Mucosa of descending colon (tissue), 3 donors: ENCODE measurements at regions of chr22 and their contacts with region 1.

Region 1: DNA sequence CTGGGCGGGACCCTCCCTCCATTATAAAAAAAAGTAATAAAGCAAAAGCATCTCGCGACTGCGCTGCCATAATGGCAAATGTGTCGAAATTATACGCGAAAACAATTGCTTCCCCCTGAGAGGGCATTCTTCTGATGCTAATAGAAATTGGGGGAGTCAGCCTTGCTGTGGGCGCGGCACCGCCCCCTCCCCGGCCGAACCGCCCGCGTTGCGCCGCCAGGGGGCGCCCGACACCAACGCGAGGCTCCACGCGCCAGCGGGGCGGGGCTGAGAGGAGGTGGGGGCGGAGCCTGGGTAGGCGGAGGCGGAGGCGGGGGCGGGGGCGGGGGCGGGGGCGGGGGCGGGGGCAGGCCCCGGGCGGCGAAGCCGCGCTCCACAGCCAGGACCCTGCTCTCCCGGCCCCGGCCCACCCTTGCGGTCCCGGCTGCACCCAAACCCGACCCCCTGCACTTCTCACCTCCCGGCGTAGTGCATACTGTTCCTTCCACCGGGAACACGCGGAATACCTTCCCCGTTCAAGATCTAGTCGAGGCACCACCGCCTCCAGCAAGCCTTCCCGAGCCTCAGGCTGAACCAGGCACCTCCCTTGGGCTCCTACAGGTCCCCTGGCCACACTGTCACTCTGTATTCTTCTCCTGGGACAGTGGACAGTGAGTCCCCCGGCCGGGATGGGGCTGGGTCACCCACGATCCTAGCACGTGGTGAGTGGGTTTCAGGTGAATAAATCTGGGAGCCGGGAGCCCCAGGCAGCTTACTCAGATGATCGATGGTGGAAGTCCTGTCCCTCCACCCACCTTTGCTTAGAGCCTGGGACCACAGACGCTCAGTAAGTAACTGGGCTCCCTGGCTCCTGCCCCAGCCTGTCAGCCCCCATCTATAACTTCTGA is 15.5 kb upstream of the UPK3A start:
- DNase-seq: peak; percentile 91 to 93 (median 92)
- ATAC-seq: peak; percentile 93
- H3K4me3 ChIP-seq: no peak overlapping the region
- H3K4me1 ChIP-seq: peaks cover 18% of the 10 kb centered on the region
- CTCF ChIP-seq: peak; percentile 92

Region 2: GRCh38 chr22:44776605-44777337 is 492.4 kb before region 1 on chr22:
- intact Hi-C with region 1: no loop called
- DNase-seq: peak in 2 of 3 donors; percentile 52 to 62
- ATAC-seq: peak; percentile 82
- H3K4me3 ChIP-seq: no peak overlapping the region
- H3K4me1 ChIP-seq: peaks cover 26% of the 10 kb centered on the region
- CTCF ChIP-seq: no peak

Region 3: GRCh38 chr22:45429981-45430775 is 161.0 kb after region 1 on chr22:
- intact Hi-C with region 1: loop called (anchors 5 kb)
- DNase-seq: no peak
- ATAC-seq: no peak
- H3K4me3 ChIP-seq: no peak overlapping the region
- H3K4me1 ChIP-seq: no peaks in the 10 kb centered on the region
- CTCF ChIP-seq: no peak

Region 4: GRCh38 chr22:45435544-45436139 is 166.4 kb after region 1 on chr22:
- intact Hi-C with region 1: loop called (anchors 5 kb)
- DNase-seq: peak; percentile 87 to 94 (median 93)
- ATAC-seq: peak; percentile 99
- H3K4me3 ChIP-seq: no peak overlapping the region
- H3K4me1 ChIP-seq: no peaks in the 10 kb centered on the region
- CTCF ChIP-seq: peak; percentile 99

Region 5: DNA sequence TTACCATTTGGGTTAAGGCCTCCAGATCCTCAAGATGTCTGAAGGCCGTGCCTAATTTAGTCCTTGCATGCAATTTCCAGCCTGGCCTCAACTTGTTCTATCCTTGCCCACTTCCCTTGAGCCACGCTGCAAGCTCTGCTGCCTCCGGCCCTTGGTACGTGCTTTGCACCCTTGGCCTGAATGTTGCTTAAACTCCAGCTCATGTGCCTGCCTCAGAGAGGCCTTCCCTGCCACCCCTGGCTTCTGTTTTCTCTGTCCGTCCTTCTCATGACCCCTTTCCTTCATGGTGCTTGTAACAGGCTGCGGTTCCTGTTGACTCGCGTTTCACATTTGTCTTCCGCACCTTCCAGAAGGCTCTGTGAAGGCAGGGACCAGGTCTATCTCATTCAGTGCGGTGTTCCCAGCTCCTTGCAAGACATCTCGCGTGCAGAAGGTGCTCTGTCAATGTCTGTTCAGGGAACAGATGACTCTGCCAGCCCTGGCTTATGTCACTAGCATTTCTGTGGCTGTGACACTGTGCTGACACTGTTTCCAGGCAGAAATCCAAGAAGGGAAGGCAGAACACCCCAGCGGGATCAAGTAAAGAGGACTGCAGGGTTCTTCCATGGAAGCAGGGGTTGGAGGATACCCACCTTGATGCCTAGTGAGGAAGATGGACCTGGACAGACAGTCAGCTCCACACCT is 295.3 kb after region 1 on chr22:
- intact Hi-C with region 1: loop called in 1 of 2 experiments (anchors 10 kb)
- DNase-seq: peak in 1 of 3 donors; percentile 4
- ATAC-seq: no peak
- H3K4me3 ChIP-seq: no peak overlapping the region
- H3K4me1 ChIP-seq: no peaks in the 10 kb centered on the region
- CTCF ChIP-seq: no peak